Activated T-helper 2 cell treated with anti-CD3 and anti-CD28 coated beads, Interferon-gamma antibody, Interleukin-2, Interleukin-4, amounts not matched to agents 10 μg/mL and 5 μg/mL and 100 μg/mL, durations not matched to agents 14 hours and 24 hours and 36 hours (primary cell): ENCODE measurements at regions of chr5 and their contacts with region 1.

Region 1: DNA sequence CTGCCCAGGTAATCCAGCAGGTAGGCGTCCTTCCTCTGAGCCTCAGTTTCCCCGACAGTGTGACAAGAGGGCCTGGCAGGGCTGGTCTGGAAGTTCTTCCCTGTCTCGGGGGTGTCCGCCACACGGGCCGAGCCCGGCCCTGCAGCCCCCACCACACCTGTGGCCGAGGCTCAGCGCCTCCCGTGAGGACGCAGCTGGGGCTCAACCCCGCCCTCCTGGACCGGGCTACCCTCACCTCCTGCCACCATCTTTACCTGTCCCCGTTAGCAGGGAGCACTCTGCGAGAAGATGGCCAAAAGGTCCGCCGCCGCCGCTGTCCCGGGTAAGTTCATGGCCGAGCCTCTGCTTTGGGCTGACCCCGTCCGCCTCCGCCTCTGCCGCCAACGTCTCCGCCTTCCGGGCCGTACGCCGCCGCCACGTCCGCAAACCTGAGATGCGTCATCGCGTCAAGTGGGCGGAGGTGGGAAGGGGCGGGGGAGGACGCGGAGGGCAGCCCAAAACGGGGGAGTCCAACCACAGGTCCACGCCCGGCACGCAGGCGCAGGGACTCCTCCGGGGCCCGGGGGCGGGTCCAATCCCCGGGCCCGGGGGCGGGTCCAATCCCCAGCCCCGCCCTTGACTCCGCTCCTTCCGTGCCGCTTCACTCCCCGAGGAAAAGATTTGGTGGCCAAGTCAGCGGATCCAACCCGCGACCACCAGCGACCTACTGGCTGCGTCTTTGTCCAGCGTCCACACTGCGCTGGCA is at the start of gene LYSMD3:
- DNase-seq: peak; percentile 93
- H3K4me3 Mint-ChIP-seq: peak within 1 kb of the TSS; percentile 98
- H3K27ac Mint-ChIP-seq: peak within 1 kb of the TSS; percentile 95
- H3K4me1 Mint-ChIP-seq: peaks cover 19% of the 10 kb centered on the region
- H3K27me3 Mint-ChIP-seq: peaks cover 11% of the 10 kb centered on the region
- total RNA-seq, gene LYSMD3: 13.5 and 13.7 TPM in 2 replicates

Region 2: GRCh38 chr5:90409318-90410177 is 119.8 kb before region 1 on chr5 and contains the start of gene CETN3:
- intact Hi-C with region 1: loop called (anchors 1 kb)
- DNase-seq: peak; percentile 88
- H3K4me3 Mint-ChIP-seq: no peak within 1 kb of the TSS
- H3K27ac Mint-ChIP-seq: no peak within 1 kb of the TSS
- H3K4me1 Mint-ChIP-seq: peaks cover 16% of the 10 kb centered on the region
- H3K27me3 Mint-ChIP-seq: peaks cover 2% of the 10 kb centered on the region
- total RNA-seq, gene CETN3: 44.4 and 49.2 TPM in 2 replicates

Region 3: DNA sequence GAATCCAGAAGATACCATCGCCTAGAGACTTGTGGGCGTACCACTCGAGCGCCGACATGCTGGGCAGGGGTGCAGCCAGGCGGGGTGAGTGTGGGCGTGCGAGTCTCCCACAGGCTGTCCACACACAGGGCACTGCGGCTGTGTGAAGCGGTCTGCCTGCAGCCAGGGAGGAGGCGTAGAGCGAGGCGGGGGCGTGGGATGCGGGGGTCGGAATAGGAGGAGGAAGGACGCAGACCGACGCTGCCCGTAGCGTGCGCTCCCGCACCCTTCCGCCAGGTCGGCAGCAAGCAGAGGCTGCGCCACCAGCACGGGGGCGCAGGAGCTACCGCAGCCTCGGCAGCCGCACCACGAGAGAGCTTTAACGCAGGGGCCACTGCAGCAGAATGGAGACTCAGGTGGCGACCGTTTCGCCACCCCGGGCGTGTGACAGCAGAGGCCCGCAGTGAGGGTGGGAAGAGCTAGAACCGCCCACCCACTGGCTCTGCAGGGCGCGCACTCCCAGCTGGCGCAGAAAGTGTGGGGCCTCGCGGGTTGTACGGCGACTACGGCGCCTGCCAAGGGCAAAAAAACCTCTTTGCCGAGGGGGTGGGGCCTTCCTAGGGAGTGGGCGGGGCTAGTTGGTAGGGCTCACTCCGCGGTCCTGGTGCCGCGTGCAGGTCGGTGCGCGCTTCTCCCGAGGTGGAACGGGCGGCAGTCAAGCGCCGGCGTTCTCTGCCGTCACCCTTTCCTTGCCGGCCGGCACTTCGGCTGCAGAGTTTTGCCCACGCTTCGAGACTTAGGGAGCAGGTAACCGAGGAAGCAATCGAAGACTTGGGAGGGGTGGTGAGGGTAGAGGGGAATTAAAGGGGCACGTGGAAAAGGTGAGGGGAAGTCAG is 54.9 kb before region 1 on chr5 and contains the starts of genes MBLAC2 and POLR3G:
- intact Hi-C with region 1: loop called (anchors 1 kb)
- DNase-seq: peak; percentile 88
- H3K4me3 Mint-ChIP-seq: peak within 1 kb of the TSS; percentile 90
- H3K27ac Mint-ChIP-seq: peak within 1 kb of the TSS; percentile 87
- H3K4me1 Mint-ChIP-seq: peaks cover 35% of the 10 kb centered on the region
- H3K27me3 Mint-ChIP-seq: no peaks in the 10 kb centered on the region
- total RNA-seq, gene MBLAC2: 6.1 and 6.4 TPM in 2 replicates
- total RNA-seq, gene POLR3G: 17.1 and 18.6 TPM in 2 replicates

Region 4: DNA sequence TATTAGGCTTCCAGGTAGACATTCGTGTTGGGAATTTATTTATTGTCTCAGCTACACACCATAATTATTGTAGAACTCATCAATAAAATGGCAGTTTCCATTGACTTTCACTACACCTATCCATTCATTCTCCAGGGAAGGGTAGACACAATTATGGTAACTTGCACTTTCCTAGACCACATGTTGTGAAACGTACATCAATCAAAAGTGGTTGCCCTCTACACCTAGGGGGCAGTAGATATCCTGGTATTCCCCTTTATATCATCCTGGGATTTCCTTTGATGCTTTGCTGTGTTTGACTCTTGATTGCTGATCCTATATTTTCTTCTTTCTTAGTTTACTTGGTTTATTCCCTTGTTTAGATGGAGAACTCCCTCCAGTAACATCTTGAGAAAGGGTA is 77.2 kb after region 1 on chr5:
- intact Hi-C with region 1: no loop called
- DNase-seq: no peak
- H3K4me3 Mint-ChIP-seq: no peak overlapping the region
- H3K27ac Mint-ChIP-seq: no peak overlapping the region
- H3K4me1 Mint-ChIP-seq: peaks cover 2% of the 10 kb centered on the region
- H3K27me3 Mint-ChIP-seq: no peaks in the 10 kb centered on the region